ENCODE measurements at regions of chr9 and their contacts with region 1.

Region 1: GRCh38 chr9:128688512-128689292 is at the start of gene SET:
- DNase-seq: peak; percentile 66 to 95
- H3K4me3 ChIP-seq: peak within 1 kb of the TSS; percentile 89 to 91
- H3K27ac ChIP-seq: peak within 1 kb of the TSS; percentile 86 to 98
- H3K4me1 ChIP-seq: peaks cover 10 to 14% of the 10 kb centered on the region in 2 donors
- H3K27me3 ChIP-seq: no peaks in the 10 kb centered on the region
- CTCF ChIP-seq: no peak
- total RNA-seq, gene SET: 102 TPM

Region 2: DNA sequence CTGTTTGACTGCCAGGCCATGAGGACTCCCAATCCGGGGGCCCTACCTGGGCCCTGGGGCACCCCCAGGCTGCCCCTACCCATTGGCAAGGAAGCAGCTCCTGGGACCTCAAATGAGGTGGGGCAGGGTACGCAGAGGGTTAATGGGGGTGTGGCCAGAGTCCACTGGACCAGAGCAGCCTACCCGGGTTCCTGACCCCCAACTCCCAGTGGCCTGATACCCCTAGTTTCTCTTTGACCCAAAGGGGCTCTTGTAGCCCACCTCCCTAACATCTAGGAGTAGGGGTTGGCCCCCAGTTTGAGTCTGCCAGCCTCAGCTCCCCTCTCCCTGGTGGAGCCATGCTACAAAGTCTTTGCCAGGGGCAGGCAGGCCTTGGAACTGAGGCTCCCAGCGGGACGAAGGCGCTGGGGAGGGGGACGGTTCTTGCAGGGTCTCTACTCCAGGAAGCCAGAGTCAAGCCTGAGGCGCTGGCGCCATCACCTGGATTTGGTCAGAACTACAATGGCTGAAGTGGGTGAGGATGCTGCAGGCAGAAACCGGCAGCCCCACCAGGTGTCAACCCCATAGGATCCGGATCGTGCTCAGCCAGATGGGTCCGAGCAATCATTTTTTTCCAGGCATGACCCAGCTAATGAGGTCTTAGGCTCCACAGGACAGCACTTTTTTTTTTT is 276.4 kb before region 1 on chr9:
- intact Hi-C with region 1: no loop called
- DNase-seq: no peak
- H3K4me3 ChIP-seq: no peak overlapping the region
- H3K27ac ChIP-seq: no peak overlapping the region
- H3K4me1 ChIP-seq: no peaks in the 10 kb centered on the region
- H3K27me3 ChIP-seq: no peaks in the 10 kb centered on the region
- CTCF ChIP-seq: peak in 2 of 3 experiments; percentile 34 to 42

Region 3: GRCh38 chr9:128656416-128657343 is 32.0 kb before region 1 on chr9 and contains the start of gene DYNC2I2:
- intact Hi-C with region 1: loop called (anchors 1 kb)
- DNase-seq: peak; percentile 76 to 96
- H3K4me3 ChIP-seq: peak within 1 kb of the TSS; percentile 78 to 84
- H3K27ac ChIP-seq: peak within 1 kb of the TSS; percentile 91 to 96
- H3K4me1 ChIP-seq: peaks cover 0 to 4% of the 10 kb centered on the region in 2 donors
- H3K27me3 ChIP-seq: no peaks in the 10 kb centered on the region
- CTCF ChIP-seq: no peak
- total RNA-seq, gene DYNC2I2: 49.9 TPM

Region 4: GRCh38 chr9:128723866-128724743 is 35.4 kb after region 1 on chr9 and contains the start of gene ZDHHC12:
- intact Hi-C with region 1: loop called (anchors 2 kb)
- DNase-seq: peak; percentile 93 to 97
- H3K4me3 ChIP-seq: peak within 1 kb of the TSS; percentile 58 to 70
- H3K27ac ChIP-seq: peak within 1 kb of the TSS; percentile 80 to 82
- H3K4me1 ChIP-seq: no peaks in the 10 kb centered on the region
- H3K27me3 ChIP-seq: no peaks in the 10 kb centered on the region
- CTCF ChIP-seq: no peak
- total RNA-seq, gene ZDHHC12: 49.6 TPM

Region 5: DNA sequence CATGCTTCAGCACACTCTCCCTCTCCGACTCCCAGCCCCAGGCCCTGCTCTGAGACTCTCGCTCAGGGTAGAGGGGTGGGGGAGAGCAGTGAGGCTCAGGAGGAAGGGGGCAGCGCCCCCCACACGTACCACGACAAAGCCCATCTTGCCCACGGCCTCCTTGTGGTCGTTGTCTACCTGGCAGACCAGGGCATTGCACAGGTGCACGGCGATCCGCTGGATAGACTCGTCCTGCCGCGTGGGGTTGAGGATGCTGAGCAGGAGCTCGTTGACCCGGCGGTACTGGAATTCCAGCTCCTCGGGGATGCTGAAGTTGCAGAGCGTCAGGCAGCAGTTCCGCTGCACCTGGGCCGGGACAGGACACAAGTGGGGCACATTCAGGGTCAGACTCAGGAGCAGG is 53.7 kb after region 1 on chr9:
- intact Hi-C with region 1: no loop called
- DNase-seq: no peak
- H3K4me3 ChIP-seq: no peak overlapping the region
- H3K27ac ChIP-seq: no peak overlapping the region
- H3K4me1 ChIP-seq: no peaks in the 10 kb centered on the region
- H3K27me3 ChIP-seq: no peaks in the 10 kb centered on the region
- CTCF ChIP-seq: no peak

Measured in ascending aorta (tissue), 2 donors.